ENCODE measurements at regions of chr1 and their contacts with region 1.

Region 1: GRCh38 chr1:151281969-151282882 is at the start of gene ZNF687:
- DNase-seq: peak; percentile 97 to 100 (median 98)
- ATAC-seq: peak; percentile 95
- H3K4me3 ChIP-seq: peak within 1 kb of the TSS; percentile 67
- H3K27ac ChIP-seq: peak within 1 kb of the TSS; percentile 99
- H3K4me1 ChIP-seq: peaks cover 24 to 33% of the 10 kb centered on the region in 2 experiments
- H3K27me3 ChIP-seq: no peaks in the 10 kb centered on the region
- CTCF ChIP-seq: 0 out of 6 replicates have a peak, but pooled peaks of 1 of the 3 experiments have one; percentile 6
- EP300 ChIP-seq: no peak
- POLR2A ChIP-seq: peak; percentile 11; the same call in 1 of the 2 replicates
- RAD21 ChIP-seq: no peak
- polyA plus RNA-seq, gene ZNF687: 0.13 to 0.21 TPM

Region 2: GRCh38 chr1:151189638-151190445 is 92.4 kb before region 1 on chr1 and contains the start of gene VPS72:
- CTCF ChIA-PET with region 1: no interaction called
- POLR2A ChIA-PET with region 1: interaction called, 10 read pairs
- in situ Hi-C with region 1: no loop called
- intact Hi-C with region 1: no loop called
- DNase-seq: peak; percentile 91 to 95 (median 92)
- ATAC-seq: peak; percentile 92
- H3K4me3 ChIP-seq: peak within 1 kb of the TSS; percentile 71
- H3K27ac ChIP-seq: peak within 1 kb of the TSS; percentile 74
- H3K4me1 ChIP-seq: peaks cover 8% of the 10 kb centered on the region in 2 experiments; a peak in 4 of 5 replicates
- H3K27me3 ChIP-seq: no peaks in the 10 kb centered on the region
- CTCF ChIP-seq: 0 out of 6 replicates have a peak, but pooled peaks of 1 of the 3 experiments have one; percentile 3
- EP300 ChIP-seq: peak; percentile 32
- POLR2A ChIP-seq: peak; percentile 91
- RAD21 ChIP-seq: no peak
- polyA plus RNA-seq, gene VPS72: 7.2 to 21.9 TPM

Region 3: DNA sequence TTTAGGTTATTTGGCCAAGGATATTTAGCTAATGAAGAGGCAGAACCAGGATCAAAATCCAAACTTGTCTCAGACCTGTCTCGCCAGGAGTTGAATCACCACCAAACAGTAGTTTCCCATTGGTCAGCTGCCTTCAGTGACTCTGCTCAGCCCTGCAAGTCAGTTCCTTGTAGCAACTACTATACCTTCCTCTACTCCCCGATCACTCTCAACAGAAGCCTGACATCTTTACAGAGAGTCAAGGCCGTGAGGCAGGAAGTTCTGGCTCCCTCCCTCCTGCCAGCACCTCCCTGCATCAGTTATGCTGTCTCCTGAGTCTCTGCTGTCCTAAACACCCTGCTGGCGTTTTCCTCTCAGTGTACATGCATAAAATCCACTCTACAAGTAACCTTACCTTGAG is 14.5 kb before region 1 on chr1:
- CTCF ChIA-PET with region 1: no interaction called
- POLR2A ChIA-PET with region 1: interaction called, 29 read pairs
- in situ Hi-C with region 1: no loop called
- intact Hi-C with region 1: no loop called
- DNase-seq: no peak
- ATAC-seq: peak; percentile 29; the same call in 1 of the 3 replicates
- H3K4me3 ChIP-seq: no peak overlapping the region
- H3K27ac ChIP-seq: no peak overlapping the region
- H3K4me1 ChIP-seq: peaks cover 0 to 5% of the 10 kb centered on the region in 2 experiments; a peak in 1 of 5 replicates
- H3K27me3 ChIP-seq: no peaks in the 10 kb centered on the region
- CTCF ChIP-seq: no peak
- EP300 ChIP-seq: no peak
- POLR2A ChIP-seq: no peak
- RAD21 ChIP-seq: no peak

Region 4: GRCh38 chr1:151311589-151312331 is 29.5 kb after region 1 on chr1:
- CTCF ChIA-PET with region 1: no interaction called
- POLR2A ChIA-PET with region 1: interaction called, 20 read pairs
- in situ Hi-C with region 1: no loop called
- intact Hi-C with region 1: no loop called
- DNase-seq: peak; percentile 85 to 97 (median 91)
- ATAC-seq: peak; percentile 98
- H3K4me3 ChIP-seq: no peak overlapping the region
- H3K27ac ChIP-seq: peak overlapping the region; percentile 97
- H3K4me1 ChIP-seq: peaks cover 12 to 45% of the 10 kb centered on the region in 2 experiments; a peak in 4 of 5 replicates
- H3K27me3 ChIP-seq: no peaks in the 10 kb centered on the region
- CTCF ChIP-seq: no peak
- EP300 ChIP-seq: peak; percentile 93
- POLR2A ChIP-seq: no peak; the same call in 1 of the 2 replicates
- RAD21 ChIP-seq: peak in 1 of 2 experiments; percentile 25; a peak in 1 of 4 replicates

Region 5: GRCh38 chr1:151346769-151347522 is 64.7 kb after region 1 on chr1 and contains the start of gene RFX5:
- CTCF ChIA-PET with region 1: no interaction called
- POLR2A ChIA-PET with region 1: interaction called, 7 read pairs
- in situ Hi-C with region 1: no loop called
- intact Hi-C with region 1: loop called (anchors 10 kb)
- DNase-seq: peak; percentile 96 to 97 (median 97)
- ATAC-seq: peak; percentile 99
- H3K4me3 ChIP-seq: peak within 1 kb of the TSS; percentile 54
- H3K27ac ChIP-seq: peak within 1 kb of the TSS; percentile 95
- H3K4me1 ChIP-seq: peaks cover 0 to 13% of the 10 kb centered on the region in 2 experiments; a peak in 3 of 5 replicates
- H3K27me3 ChIP-seq: no peaks in the 10 kb centered on the region
- CTCF ChIP-seq: no peak
- EP300 ChIP-seq: peak; percentile 5
- POLR2A ChIP-seq: peak; percentile 82
- RAD21 ChIP-seq: no peak
- polyA plus RNA-seq, gene RFX5: 3.8 to 4.9 TPM

Region 6: GRCh38 chr1:151611832-151612500 is 329.7 kb after region 1 on chr1 and contains the start of gene SNX27:
- CTCF ChIA-PET with region 1: no interaction called
- POLR2A ChIA-PET with region 1: no interaction called
- in situ Hi-C with region 1: no loop called
- intact Hi-C with region 1: no loop called
- DNase-seq: peak; percentile 94 to 96 (median 95)
- ATAC-seq: peak; percentile 97
- H3K4me3 ChIP-seq: peak within 1 kb of the TSS; percentile 98
- H3K27ac ChIP-seq: peak within 1 kb of the TSS; percentile 89
- H3K4me1 ChIP-seq: peaks cover 16 to 25% of the 10 kb centered on the region in 2 experiments; a peak in 4 of 5 replicates
- H3K27me3 ChIP-seq: peaks cover 0 to 3% of the 10 kb centered on the region in 2 experiments; a peak in 1 of 5 replicates
- CTCF ChIP-seq: no peak
- EP300 ChIP-seq: no peak
- POLR2A ChIP-seq: peak; percentile 60
- RAD21 ChIP-seq: no peak
- polyA plus RNA-seq, gene SNX27: 4.5 to 10.1 TPM